HCT116 (cell line): ENCODE measurements at regions of chr11 and their contacts with region 1.

Region 1: DNA sequence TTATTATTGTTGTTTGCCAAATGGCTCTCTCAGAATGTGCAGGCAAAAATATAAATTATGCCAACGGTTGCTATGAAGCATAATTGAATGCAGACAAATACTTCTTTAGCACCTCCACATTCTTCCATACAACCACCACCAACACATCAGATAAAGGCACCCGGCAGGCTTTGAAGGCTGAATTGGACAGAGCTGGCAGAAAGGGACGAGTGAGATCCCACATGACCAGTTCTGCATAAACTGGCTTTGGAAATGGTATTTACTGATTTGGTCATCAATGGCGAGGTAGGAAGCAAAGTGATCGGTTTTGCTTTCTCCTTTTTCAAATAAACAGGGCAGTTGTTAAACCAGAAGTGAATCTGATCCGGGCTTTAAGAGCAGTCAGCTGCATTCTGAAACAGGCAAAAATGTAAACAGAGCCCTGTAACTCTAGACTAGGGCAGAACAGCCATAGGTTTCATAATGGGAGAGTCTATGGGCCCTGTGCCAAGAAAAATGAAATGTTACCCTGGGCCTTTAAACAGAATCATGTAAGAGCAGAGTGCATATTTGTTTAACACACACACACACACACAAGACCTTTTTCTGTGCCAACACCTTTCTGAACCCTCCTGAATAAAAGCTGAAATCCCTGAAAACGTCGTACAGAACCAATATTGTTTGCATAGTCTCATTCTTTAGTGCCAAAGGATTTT is 97.7 kb downstream of the MPPED2 start:
- DNase-seq: no peak
- ATAC-seq: no peak
- H3K4me3 ChIP-seq: no peak overlapping the region
- H3K27ac ChIP-seq: no peak overlapping the region
- H3K4me1 ChIP-seq: no peaks in the 10 kb centered on the region
- H3K27me3 ChIP-seq: peaks cover 42% of the 10 kb centered on the region; the same call in 1 of the 2 replicates
- CTCF ChIP-seq: no peak
- POLR2A ChIP-seq: no peak
- RAD21 ChIP-seq: no peak

Region 2: GRCh38 chr11:30545507-30545906 is 57.1 kb after region 1 on chr11:
- CTCF ChIA-PET with region 1: no interaction called
- POLR2A ChIA-PET with region 1: no interaction called
- RAD21 ChIA-PET with region 1: no interaction called
- intact Hi-C with region 1: loop called (anchors 10 kb)
- DNase-seq: no peak
- ATAC-seq: no peak
- H3K4me3 ChIP-seq: no peak overlapping the region
- H3K27ac ChIP-seq: no peak overlapping the region
- H3K4me1 ChIP-seq: no peaks in the 10 kb centered on the region
- H3K27me3 ChIP-seq: peaks cover 31% of the 10 kb centered on the region
- CTCF ChIP-seq: no peak
- POLR2A ChIP-seq: no peak
- RAD21 ChIP-seq: no peak